Activated CD4-positive, alpha-beta memory T cell treated with anti-CD3 and anti-CD28 coated beads, Interleukin-2, amount 10 ng/mL, durations not matched to agents 7 days and 5 days (primary cell): ENCODE measurements at regions of chr1 and their contacts with region 1.

Region 1: DNA sequence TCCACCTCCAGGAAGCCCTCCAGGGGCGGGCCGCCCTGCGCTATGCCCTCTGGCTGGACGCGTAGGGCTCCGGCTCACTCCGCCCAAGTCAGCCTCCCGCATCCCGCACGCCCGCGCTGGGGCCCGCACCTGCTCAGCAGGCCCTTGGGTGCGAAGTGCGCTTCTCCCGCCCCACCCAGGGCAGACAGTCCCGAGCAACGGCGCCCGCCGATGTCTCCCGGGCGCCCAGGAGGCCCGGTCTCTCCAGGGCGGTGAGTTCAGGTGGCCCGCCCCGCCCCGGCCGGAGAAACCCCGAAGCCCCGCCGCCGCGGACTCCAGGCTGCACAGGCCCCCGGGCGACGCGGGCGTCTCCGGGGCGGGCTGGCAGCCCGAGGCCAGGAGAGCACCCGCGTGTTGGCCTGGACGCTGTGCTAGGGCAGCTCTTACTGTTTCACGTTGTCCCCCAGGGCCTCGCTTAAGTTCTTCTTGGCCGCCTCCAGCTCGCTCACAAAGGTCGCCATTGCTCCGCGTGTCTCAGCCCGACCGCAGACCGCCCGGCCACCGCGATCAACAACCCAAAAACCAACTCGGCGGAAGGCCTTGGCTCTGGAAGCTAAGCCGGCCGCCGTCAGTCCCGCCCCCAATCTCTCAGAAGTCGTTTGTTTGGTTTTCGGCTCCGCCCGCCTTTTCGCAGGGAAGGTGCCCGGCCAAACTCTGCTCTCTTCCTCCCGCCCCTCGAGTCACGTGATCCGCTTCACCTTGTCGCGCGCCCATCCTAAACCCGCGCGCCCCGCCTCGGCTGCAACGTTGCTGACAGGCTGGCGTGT is at the start of gene TADA1:
- DNase-seq: peak; percentile 99
- H3K4me3 Mint-ChIP-seq: peak within 1 kb of the TSS; percentile 92
- H3K27ac Mint-ChIP-seq: peak within 1 kb of the TSS; percentile 97
- H3K4me1 Mint-ChIP-seq: peaks cover 52% of the 10 kb centered on the region
- H3K27me3 Mint-ChIP-seq: peaks cover 3% of the 10 kb centered on the region
- total RNA-seq, gene TADA1: 17.0 to 17.9 TPM

Region 2: GRCh38 chr1:166838766-166839599 is 37.0 kb before region 1 on chr1 and contains the start of gene POGK:
- CTCF ChIA-PET with region 1: interaction called, 9 read pairs
- POLR2A ChIA-PET with region 1: interaction called, 30 read pairs
- DNase-seq: peak; percentile 87
- H3K4me3 Mint-ChIP-seq: peak within 1 kb of the TSS; percentile 84
- H3K27ac Mint-ChIP-seq: peak within 1 kb of the TSS; percentile 82
- H3K4me1 Mint-ChIP-seq: peaks cover 39% of the 10 kb centered on the region
- H3K27me3 Mint-ChIP-seq: peaks cover 8% of the 10 kb centered on the region
- total RNA-seq, gene POGK: 34.4 to 36.5 TPM

Region 3: GRCh38 chr1:166848193-166848592 is 27.7 kb before region 1 on chr1:
- CTCF ChIA-PET with region 1: interaction called, 3 read pairs
- POLR2A ChIA-PET with region 1: interaction called, 10 read pairs
- DNase-seq: no peak
- H3K4me3 Mint-ChIP-seq: no peak overlapping the region
- H3K27ac Mint-ChIP-seq: peak overlapping the region; percentile 45
- H3K4me1 Mint-ChIP-seq: peaks cover 53% of the 10 kb centered on the region
- H3K27me3 Mint-ChIP-seq: no peaks in the 10 kb centered on the region

Region 4: GRCh38 chr1:167059045-167059808 is 183.3 kb after region 1 on chr1:
- CTCF ChIA-PET with region 1: interaction called, 81 read pairs
- POLR2A ChIA-PET with region 1: interaction called, 4 read pairs
- DNase-seq: peak; percentile 79
- H3K4me3 Mint-ChIP-seq: no peak overlapping the region
- H3K27ac Mint-ChIP-seq: peak overlapping the region; percentile 22
- H3K4me1 Mint-ChIP-seq: peaks cover 14% of the 10 kb centered on the region
- H3K27me3 Mint-ChIP-seq: peaks cover 2% of the 10 kb centered on the region